T-cell (primary cell): ENCODE measurements at regions of chr10 and their contacts with region 1.

Region 1: GRCh38 chr10:5813287-5814109 is at the start of gene GDI2:
- DNase-seq: peak; percentile 91 to 98 (median 95)
- ATAC-seq: peak; percentile 93 to 95 (median 94)
- H3K4me3 ChIP-seq: peak within 1 kb of the TSS; percentile 84 to 87
- H3K4me3 Mint-ChIP-seq: peak within 1 kb of the TSS; percentile 85 to 98 (median 90)
- H3K27ac ChIP-seq: peak within 1 kb of the TSS; percentile 94
- H3K27ac Mint-ChIP-seq: peak within 1 kb of the TSS; percentile 92 to 94
- H3K4me1 ChIP-seq: peaks cover 30 to 35% of the 10 kb centered on the region in 2 experiments
- H3K4me1 Mint-ChIP-seq: peaks cover 57 to 65% (median 63%) of the 10 kb centered on the region in 3 donors
- H3K27me3 ChIP-seq: no peaks in the 10 kb centered on the region
- H3K27me3 Mint-ChIP-seq: no peaks in the 10 kb centered on the region
- total RNA-seq, gene GDI2: 96.2 to 130 (median 118) TPM

Region 2: DNA sequence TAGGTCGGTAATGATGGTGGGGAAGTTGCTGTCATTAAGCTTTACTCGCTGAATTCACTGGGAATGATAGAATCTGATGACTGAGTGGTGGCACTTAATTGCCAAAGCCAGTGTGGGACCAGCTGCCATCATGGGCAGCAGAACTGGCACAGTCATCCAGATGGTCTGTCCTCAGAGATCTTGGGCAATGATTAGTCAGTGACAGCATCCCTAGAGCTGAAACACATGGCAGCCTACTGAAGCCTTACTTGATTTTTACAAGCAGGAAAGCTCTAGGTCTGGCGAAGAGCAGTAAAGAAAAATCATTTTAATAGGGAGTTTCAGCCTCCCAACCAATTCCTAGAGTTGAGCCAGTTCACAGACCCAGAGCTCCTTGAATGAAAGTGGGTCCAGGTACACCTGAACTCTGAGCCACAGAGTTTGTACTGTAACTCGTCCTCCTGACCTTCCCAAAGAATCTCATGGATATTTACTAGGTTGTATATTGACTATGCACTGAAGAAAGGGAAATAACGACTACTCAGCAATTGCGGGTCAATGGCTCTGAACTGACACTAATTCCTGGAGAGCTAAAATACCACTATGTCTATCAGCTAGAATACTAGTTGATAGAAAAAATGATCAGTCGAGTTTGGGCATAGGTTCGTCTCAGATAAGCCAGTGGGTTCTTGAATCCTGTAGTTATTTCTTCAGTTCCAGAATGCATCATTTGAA is 142.7 kb before region 1 on chr10:
- CTCF ChIA-PET with region 1: no interaction called
- POLR2A ChIA-PET with region 1: no interaction called
- DNase-seq: no peak
- ATAC-seq: no peak
- H3K4me3 ChIP-seq: no peak overlapping the region
- H3K4me3 Mint-ChIP-seq: no peak overlapping the region
- H3K27ac ChIP-seq: no peak overlapping the region
- H3K27ac Mint-ChIP-seq: no peak overlapping the region
- H3K4me1 ChIP-seq: peaks cover 6 to 10% of the 10 kb centered on the region in 2 experiments
- H3K4me1 Mint-ChIP-seq: peaks cover 7 to 14% (median 10%) of the 10 kb centered on the region in 3 donors
- H3K27me3 ChIP-seq: peaks cover 0 to 2% of the 10 kb centered on the region in 2 experiments
- H3K27me3 Mint-ChIP-seq: peaks cover 0 to 13% of the 10 kb centered on the region in 2 donors

Region 3: DNA sequence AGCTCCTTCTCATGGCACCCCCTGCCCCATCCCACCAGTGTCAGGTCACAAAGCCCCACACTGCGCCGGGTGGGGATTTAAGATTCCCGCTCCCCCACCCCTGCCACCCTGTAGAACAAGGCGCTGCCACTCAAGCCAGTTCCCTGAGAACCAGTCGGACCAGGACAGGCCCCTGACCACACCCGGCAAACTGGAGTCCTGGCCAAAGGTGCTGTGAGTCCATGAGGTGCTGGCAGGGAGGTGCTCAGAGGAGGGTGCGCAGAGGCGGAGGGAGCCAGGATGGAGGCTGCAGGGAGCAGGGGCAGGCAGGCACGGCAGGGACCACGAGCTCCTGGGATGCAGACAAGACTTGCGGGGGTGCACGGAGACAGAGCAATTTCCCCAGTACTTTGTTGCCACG is 19.4 kb after region 1 on chr10:
- CTCF ChIA-PET with region 1: no interaction called
- POLR2A ChIA-PET with region 1: interaction called in 1 of 2 experiments, 15 read pairs
- DNase-seq: no peak
- ATAC-seq: no peak
- H3K4me3 ChIP-seq: no peak overlapping the region
- H3K4me3 Mint-ChIP-seq: no peak overlapping the region
- H3K27ac ChIP-seq: no peak overlapping the region
- H3K27ac Mint-ChIP-seq: no peak overlapping the region
- H3K4me1 ChIP-seq: no peaks in the 10 kb centered on the region
- H3K4me1 Mint-ChIP-seq: peaks cover 0 to 2% (median 0%) of the 10 kb centered on the region in 3 donors
- H3K27me3 ChIP-seq: peaks cover 0 to 5% of the 10 kb centered on the region in 2 experiments
- H3K27me3 Mint-ChIP-seq: no peaks in the 10 kb centered on the region